ENCODE measurements at regions of chr5 and their contacts with region 1.

Region 1: GRCh38 chr5:75668977-75669689 is 48.1 kb downstream of the POC5 start:
- DNase-seq: peak; percentile 78
- ATAC-seq: peak; percentile 97
- H3K4me3 ChIP-seq: peak overlapping the region; percentile 49
- H3K27ac ChIP-seq: peak overlapping the region; percentile 63
- H3K4me1 ChIP-seq: peaks cover 10% of the 10 kb centered on the region
- H3K27me3 ChIP-seq: no peaks in the 10 kb centered on the region
- CTCF ChIP-seq: no peak
- EP300 ChIP-seq: 0 out of 4 replicates have a peak, but pooled peaks of 1 of the 2 experiments have one; percentile 14
- POLR2A ChIP-seq: peak; percentile 78
- RAD21 ChIP-seq: peak; percentile 34; the same call in 1 of the 2 replicates

Region 2: GRCh38 chr5:75236322-75237316 is 432.5 kb before region 1 on chr5 and contains the start of gene ANKRD31:
- CTCF ChIA-PET with region 1: interaction called, 11 read pairs
- POLR2A ChIA-PET with region 1: no interaction called
- RAD21 ChIA-PET with region 1: interaction called, 15 read pairs
- SMC1A ChIA-PET with region 1: interaction called, 14 read pairs
- in situ Hi-C with region 1: loop called (anchors 5 kb)
- intact Hi-C with region 1: no loop called
- DNase-seq: peak; percentile 42
- ATAC-seq: peak; percentile 100
- H3K4me3 ChIP-seq: peak within 1 kb of the TSS; percentile 63
- H3K27ac ChIP-seq: no peak within 1 kb of the TSS
- H3K4me1 ChIP-seq: peaks cover 3% of the 10 kb centered on the region; the same call in 1 of the 2 replicates
- H3K27me3 ChIP-seq: no peaks in the 10 kb centered on the region
- CTCF ChIP-seq: peak; percentile 60 to 85 (median 72); a peak in 5 of 6 replicates
- EP300 ChIP-seq: peak in 1 of 2 experiments; percentile 16; a peak in 1 of 4 replicates
- POLR2A ChIP-seq: peak; percentile 71
- RAD21 ChIP-seq: peak; percentile 64
- polyA plus RNA-seq, gene ANKRD31: 0.02 TPM in 1 of 2 experiments, not detected in the other

Region 3: DNA sequence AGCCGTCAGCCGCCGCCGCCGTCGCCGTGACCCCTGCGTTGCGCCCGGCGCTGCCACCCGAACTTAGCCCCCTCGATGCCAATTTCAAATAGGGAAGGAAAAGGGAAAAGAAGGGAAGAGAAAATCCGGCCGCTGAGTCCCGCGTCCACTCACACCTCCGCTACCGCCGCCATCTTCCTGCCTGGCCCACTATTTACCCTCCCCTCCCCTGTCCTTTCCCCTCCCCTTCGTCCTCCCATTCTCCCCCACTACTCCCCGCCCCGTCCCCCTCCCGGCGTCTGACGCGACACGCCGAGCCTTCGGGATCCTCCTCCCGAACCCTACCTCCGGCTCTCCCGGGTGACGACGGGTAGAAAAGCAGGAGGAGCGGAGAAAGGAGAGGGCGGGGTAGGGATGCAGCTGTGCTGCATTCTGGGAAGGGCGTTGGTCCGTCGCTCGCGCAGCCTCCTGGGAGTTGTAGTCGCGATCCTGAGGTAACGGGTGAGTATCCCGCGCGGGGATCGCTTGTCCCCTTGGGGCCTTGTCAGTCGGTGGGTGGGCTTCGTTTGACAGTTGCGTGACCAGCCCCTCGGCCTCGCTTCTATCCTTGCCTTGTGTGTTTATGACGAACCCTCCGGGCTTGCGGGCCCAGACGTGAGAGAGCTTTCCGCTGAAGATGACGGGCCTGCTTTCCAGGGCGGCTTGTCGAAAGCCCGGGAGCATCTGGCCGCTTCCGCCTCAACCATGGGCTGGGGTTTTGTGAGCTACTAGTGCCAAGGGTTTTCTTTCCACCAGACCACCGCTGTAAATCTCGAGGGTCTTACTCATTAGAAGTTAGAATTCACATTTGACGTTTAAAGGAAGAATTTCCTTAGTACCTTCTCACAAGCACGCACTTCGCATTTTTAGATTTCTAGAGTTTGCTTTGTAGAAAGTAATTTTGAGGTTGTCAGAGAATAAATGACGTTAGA is 157.4 kb before region 1 on chr5 and contains the starts of genes CERT1 and POLK:
- CTCF ChIA-PET with region 1: interaction called, 3 read pairs
- POLR2A ChIA-PET with region 1: no interaction called
- RAD21 ChIA-PET with region 1: interaction called, 10 read pairs
- SMC1A ChIA-PET with region 1: interaction called, 14 read pairs
- in situ Hi-C with region 1: no loop called
- intact Hi-C with region 1: loop called (anchors 5 kb)
- DNase-seq: peak; percentile 96
- ATAC-seq: peak; percentile 76
- H3K4me3 ChIP-seq: peak within 1 kb of the TSS; percentile 98
- H3K27ac ChIP-seq: peak within 1 kb of the TSS; percentile 95
- H3K4me1 ChIP-seq: 0 out of 2 replicates have a peak, but pooled peaks cover 3% of the 10 kb centered on the region
- H3K27me3 ChIP-seq: no peaks in the 10 kb centered on the region
- CTCF ChIP-seq: no peak
- EP300 ChIP-seq: no peak; a peak in 1 of 4 replicates
- POLR2A ChIP-seq: peak; percentile 70
- RAD21 ChIP-seq: no peak; the same call in 1 of the 2 replicates
- polyA plus RNA-seq, gene CERT1: 7.7 to 10.4 TPM
- polyA plus RNA-seq, gene POLK: 10.4 to 10.7 TPM

Region 4: DNA sequence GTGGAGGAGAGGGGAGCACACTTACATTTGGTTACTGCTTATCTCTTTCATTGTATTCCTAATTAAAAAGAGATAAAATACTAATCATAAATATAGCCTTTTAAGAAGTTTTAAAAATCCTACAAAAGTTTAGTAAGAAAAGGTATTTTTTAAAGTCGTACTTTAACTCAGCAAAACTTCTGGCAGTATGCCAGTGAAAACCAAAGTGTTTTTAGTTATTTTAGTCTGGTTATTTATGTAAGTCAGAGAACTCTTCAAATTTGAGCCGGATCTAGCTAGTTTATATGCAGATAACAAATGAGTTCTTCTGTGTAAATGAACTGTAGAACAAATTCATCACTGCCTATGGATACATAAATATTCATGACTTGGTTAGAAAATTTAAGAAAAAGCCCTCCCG is 94.3 kb before region 1 on chr5:
- CTCF ChIA-PET with region 1: interaction called, 3 read pairs
- POLR2A ChIA-PET with region 1: interaction called, 11 read pairs
- RAD21 ChIA-PET with region 1: interaction called, 22 read pairs
- SMC1A ChIA-PET with region 1: interaction called, 14 read pairs
- in situ Hi-C with region 1: no loop called
- intact Hi-C with region 1: no loop called
- DNase-seq: no peak
- ATAC-seq: no peak; the same call in 2 of the 3 replicates
- H3K4me3 ChIP-seq: peak overlapping the region; percentile 40; the same call in 1 of the 2 replicates
- H3K27ac ChIP-seq: peak overlapping the region; percentile 84
- H3K4me1 ChIP-seq: peaks cover 15% of the 10 kb centered on the region
- H3K27me3 ChIP-seq: no peaks in the 10 kb centered on the region
- CTCF ChIP-seq: no peak
- EP300 ChIP-seq: no peak
- POLR2A ChIP-seq: no peak
- RAD21 ChIP-seq: no peak

Region 5: GRCh38 chr5:75656311-75657003 is 12.7 kb before region 1 on chr5:
- CTCF ChIA-PET with region 1: interaction called, 5 read pairs
- POLR2A ChIA-PET with region 1: interaction called, 5 read pairs
- RAD21 ChIA-PET with region 1: interaction called, 5 read pairs
- SMC1A ChIA-PET with region 1: interaction called, 16 read pairs
- in situ Hi-C with region 1: no loop called
- intact Hi-C with region 1: no loop called
- DNase-seq: no peak
- ATAC-seq: no peak
- H3K4me3 ChIP-seq: no peak overlapping the region
- H3K27ac ChIP-seq: no peak overlapping the region
- H3K4me1 ChIP-seq: peaks cover 11% of the 10 kb centered on the region; the same call in 1 of the 2 replicates
- H3K27me3 ChIP-seq: no peaks in the 10 kb centered on the region
- CTCF ChIP-seq: no peak
- EP300 ChIP-seq: no peak
- POLR2A ChIP-seq: no peak
- RAD21 ChIP-seq: no peak

Measured in GM12878 (cell line).